PC-3 (cell line): ENCODE measurements at regions of chr17 and their contacts with region 1.

Region 1: GRCh38 chr17:20121359-20122253 is 112.4 kb downstream of the SPECC1 start:
- DNase-seq: peak; percentile 71
- ATAC-seq: peak; percentile 67
- H3K4me3 ChIP-seq: no peak overlapping the region
- H3K27ac ChIP-seq: no peak overlapping the region
- H3K4me1 ChIP-seq: peaks cover 5% of the 10 kb centered on the region; the same call in 1 of the 2 replicates
- H3K27me3 ChIP-seq: no peaks in the 10 kb centered on the region
- CTCF ChIP-seq: peak; percentile 98

Region 2: DNA sequence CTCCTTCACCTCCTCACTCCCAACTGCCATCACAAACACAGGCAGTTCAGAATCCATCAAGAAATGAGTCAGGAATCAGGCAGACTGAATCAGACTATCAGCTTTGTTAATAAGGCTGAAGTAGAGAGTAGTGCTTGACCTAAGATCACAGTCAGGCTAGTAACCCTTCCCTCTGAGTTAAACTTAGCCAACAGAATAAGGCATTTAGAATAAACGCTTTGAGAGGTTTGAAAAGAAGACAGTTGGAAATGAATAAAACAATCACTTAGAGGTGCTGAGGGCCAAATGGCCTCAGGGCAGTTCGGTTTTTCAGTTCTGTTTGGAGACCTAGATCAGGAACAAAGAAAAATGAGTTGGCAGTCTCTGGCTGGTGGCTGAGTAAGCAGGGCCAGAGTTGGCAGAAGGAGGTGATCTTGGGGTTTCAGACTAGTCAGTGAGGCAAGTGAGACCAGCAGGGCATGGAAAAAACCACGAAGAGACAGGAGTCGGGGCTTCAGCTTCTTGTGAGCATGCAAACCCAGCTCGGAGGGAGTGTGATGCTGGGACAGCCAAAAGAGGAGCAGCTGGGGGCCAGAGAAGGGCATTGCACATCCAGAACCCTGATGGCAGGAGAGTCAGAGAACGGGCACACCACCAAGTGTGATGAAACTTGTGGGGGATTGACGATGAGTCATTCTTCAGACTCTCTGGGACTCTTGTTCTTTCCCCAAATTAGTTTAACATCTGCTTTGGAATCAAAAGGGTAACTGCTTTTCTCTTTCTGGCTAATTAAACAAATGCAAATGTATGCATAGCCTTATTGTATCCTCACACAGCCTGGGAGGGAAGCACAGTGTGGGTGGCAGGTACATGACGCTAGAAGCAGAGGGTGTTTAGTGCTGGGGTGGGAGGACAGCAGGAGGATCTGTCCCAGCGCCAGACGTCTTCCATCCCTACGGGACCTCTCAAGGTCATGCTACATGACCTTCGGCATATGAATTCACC is 57.6 kb before region 1 on chr17:
- CTCF ChIA-PET with region 1: no interaction called
- POLR2A ChIA-PET with region 1: no interaction called
- intact Hi-C with region 1: loop called (anchors 10 kb)
- DNase-seq: peak; percentile 96
- ATAC-seq: peak; percentile 58
- H3K4me3 ChIP-seq: peak overlapping the region; percentile 44
- H3K27ac ChIP-seq: peak overlapping the region; percentile 93
- H3K4me1 ChIP-seq: peaks cover 76% of the 10 kb centered on the region
- H3K27me3 ChIP-seq: no peaks in the 10 kb centered on the region
- CTCF ChIP-seq: no peak